Cardiac septum (tissue), 1 donor: ENCODE measurements at regions of chr12 and their contacts with region 1.

Region 1: GRCh38 chr12:2198005-2198501 is 145.3 kb downstream of the CACNA1C start:
- DNase-seq: peak; percentile 77

Region 2: DNA sequence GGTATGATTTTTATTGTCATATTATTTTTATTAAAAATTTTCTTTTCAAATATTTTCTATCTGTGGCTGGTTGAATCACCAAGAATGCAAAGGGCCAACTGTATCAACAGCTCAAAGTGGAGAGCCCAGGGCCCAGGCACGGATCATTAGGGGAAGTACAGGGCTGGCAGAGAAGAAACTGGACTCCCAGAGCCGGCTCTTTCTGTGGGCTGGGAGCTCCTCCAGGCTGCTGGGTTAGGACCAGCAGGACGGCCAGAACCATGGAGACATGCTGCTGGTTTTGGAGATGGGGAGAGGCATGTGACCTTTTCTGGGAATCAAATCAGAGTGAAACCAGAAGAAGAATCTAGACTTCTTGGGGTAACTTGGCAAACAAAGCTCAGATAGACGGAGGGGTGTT is 75.2 kb after region 1 on chr12:
- intact Hi-C with region 1: loop called (anchors 5 kb)
- DNase-seq: peak; percentile 78